Heart right ventricle (tissue), 16 donors: ENCODE measurements at regions of chr10 and their contacts with region 1.

Region 1: GRCh38 chr10:52308251-52309031 is 5.6 kb upstream of the DKK1 start:
- DNase-seq: peak; percentile 36 to 46
- ATAC-seq: peak; percentile 80 to 92 (median 88)
- H3K4me3 ChIP-seq: peak overlapping the region; percentile 6 to 60 (median 52)
- H3K27ac ChIP-seq: no peak overlapping the region
- H3K4me1 ChIP-seq: peaks cover 0 to 9% (median 6%) of the 10 kb centered on the region in 9 donors
- H3K27me3 ChIP-seq: peaks cover 0 to 57% (median 21%) of the 10 kb centered on the region in 7 donors
- CTCF ChIP-seq: peak; percentile 28 to 75 (median 66)

Region 2: GRCh38 chr10:52566471-52567246 is 258.2 kb after region 1 on chr10:
- intact Hi-C with region 1: loop called in 1 of 10 experiments (anchors 10 kb)
- DNase-seq: no peak
- ATAC-seq: no peak
- H3K4me3 ChIP-seq: no peak overlapping the region
- H3K27ac ChIP-seq: no peak overlapping the region
- H3K4me1 ChIP-seq: no peaks in the 10 kb centered on the region
- H3K27me3 ChIP-seq: peaks cover 0 to 4% (median 0%) of the 10 kb centered on the region in 7 donors
- CTCF ChIP-seq: peak in 6 of 9 donors; percentile 14 to 38 (median 30)

Region 3: DNA sequence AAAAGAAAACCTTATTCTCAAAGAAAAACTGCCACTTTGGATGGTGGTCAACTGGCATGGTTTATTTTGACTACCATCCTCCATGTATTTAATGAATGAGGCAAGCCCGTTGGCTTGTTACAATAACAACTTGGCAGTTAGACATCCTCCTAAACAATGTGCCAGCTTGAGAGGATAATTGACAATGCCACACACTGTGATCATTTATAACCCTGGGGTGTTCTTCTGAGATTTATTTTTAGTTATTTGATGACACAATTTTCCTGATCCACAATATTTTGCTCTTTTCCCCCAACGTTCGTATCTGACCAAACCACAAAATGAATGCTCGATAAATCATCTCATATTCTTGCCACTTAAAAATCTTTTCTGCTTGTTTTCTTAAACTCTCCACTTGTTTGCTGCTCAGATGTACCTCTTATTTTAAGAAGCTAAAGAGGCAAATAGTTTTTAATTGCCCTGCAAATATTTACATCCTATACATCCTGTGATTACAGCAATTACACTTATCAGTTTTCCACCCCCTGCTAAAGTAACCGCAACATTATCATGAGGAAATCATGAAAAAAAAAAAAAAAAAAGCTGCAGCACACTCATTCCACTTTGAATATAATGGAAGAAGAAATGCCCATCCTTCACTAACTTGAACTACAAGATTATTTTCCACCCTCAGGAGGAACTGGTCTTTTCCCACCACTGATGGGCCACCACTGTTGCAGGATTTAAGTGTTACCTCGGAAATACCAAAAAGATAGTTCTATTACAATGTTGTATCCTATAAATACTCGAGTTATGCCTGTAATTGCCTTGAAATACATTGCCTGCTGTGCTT is 344.2 kb after region 1 on chr10:
- intact Hi-C with region 1: loop called in 2 of 10 experiments (anchors 5 kb)
- DNase-seq: no peak
- ATAC-seq: peak in 7 of 8 donors; percentile 30 to 80 (median 64)
- H3K4me3 ChIP-seq: no peak overlapping the region
- H3K27ac ChIP-seq: peak overlapping the region in 8 of 10 donors; percentile 1 to 64 (median 28)
- H3K4me1 ChIP-seq: peaks cover 0 to 15% (median 0%) of the 10 kb centered on the region in 9 donors
- H3K27me3 ChIP-seq: no peaks in the 10 kb centered on the region
- CTCF ChIP-seq: no peak

Region 4: DNA sequence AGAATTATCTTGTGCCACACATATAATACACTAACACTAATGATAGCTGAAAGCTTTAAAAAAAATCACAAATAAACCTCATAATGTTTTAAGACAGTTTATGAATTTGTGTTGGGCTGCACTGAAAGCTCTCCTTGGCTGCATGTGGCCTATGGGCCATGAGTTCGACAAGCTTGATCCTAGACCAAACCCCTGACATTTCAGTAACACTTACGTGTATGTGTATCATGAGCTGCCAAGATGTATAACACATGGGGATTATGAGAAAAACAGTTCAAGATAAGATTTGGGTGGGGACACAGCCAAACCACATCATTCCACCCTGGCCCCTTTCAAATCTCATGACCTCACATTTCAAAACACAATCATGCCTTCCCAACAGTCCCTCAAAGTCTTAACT is 1668.8 kb after region 1 on chr10:
- intact Hi-C with region 1: no loop called
- DNase-seq: no peak
- ATAC-seq: no peak
- H3K4me3 ChIP-seq: no peak overlapping the region
- H3K27ac ChIP-seq: no peak overlapping the region
- H3K4me1 ChIP-seq: no peaks in the 10 kb centered on the region
- H3K27me3 ChIP-seq: no peaks in the 10 kb centered on the region
- CTCF ChIP-seq: no peak